GM12878 (cell line): ENCODE measurements at regions of chr11 and their contacts with region 1.

Region 1: GRCh38 chr11:95699631-95700470 is 89.7 kb downstream of the FAM76B start:
- DNase-seq: no peak
- ATAC-seq: peak; percentile 73
- H3K4me3 ChIP-seq: peak overlapping the region; percentile 30; the same call in 1 of the 2 replicates
- H3K27ac ChIP-seq: peak overlapping the region; percentile 15; the same call in 1 of the 2 replicates
- H3K4me1 ChIP-seq: peaks cover 18% of the 10 kb centered on the region
- H3K27me3 ChIP-seq: no peaks in the 10 kb centered on the region
- CTCF ChIP-seq: no peak
- EP300 ChIP-seq: 0 out of 4 replicates have a peak, but pooled peaks of 1 of the 2 experiments have one; percentile 13
- POLR2A ChIP-seq: no peak
- RAD21 ChIP-seq: no peak

Region 2: DNA sequence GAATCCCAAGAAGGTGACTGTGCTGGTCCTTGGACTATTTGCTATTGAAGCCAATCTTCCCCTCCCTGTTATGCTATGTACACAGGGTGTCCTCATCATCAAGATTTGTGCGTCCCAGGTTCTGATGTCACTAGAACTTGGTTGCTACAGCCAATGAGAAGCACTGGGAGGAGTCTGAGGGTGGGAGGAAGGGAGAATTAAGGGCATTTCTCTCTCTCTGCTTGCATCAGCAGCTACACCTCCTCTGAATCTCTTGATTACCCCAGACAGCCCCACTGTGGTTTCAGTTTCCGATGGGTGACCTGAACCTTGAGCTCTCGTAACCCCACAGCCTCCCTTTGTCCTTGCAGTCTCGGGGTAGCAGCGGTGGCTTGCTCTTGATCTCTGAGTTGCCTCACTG is 256.5 kb before region 1 on chr11:
- CTCF ChIA-PET with region 1: interaction called, 15 read pairs
- POLR2A ChIA-PET with region 1: no interaction called
- RAD21 ChIA-PET with region 1: interaction called, 9 read pairs
- SMC1A ChIA-PET with region 1: interaction called, 5 read pairs
- in situ Hi-C with region 1: no loop called
- intact Hi-C with region 1: loop called (anchors 5 kb)
- DNase-seq: peak; percentile 48
- ATAC-seq: peak; percentile 100
- H3K4me3 ChIP-seq: no peak overlapping the region
- H3K27ac ChIP-seq: no peak overlapping the region
- H3K4me1 ChIP-seq: no peaks in the 10 kb centered on the region; the same call in 1 of the 2 replicates
- H3K27me3 ChIP-seq: peaks cover 0 to 2% of the 10 kb centered on the region in 2 experiments; a peak in 1 of 4 replicates
- CTCF ChIP-seq: no peak
- EP300 ChIP-seq: peak in 1 of 2 experiments; percentile 21; a peak in 1 of 4 replicates
- POLR2A ChIP-seq: no peak
- RAD21 ChIP-seq: no peak

Region 3: GRCh38 chr11:95545116-95545875 is 154.6 kb before region 1 on chr11:
- CTCF ChIA-PET with region 1: interaction called, 36 read pairs
- POLR2A ChIA-PET with region 1: no interaction called
- RAD21 ChIA-PET with region 1: interaction called, 22 read pairs
- SMC1A ChIA-PET with region 1: interaction called, 23 read pairs
- in situ Hi-C with region 1: no loop called
- intact Hi-C with region 1: no loop called
- DNase-seq: no peak
- ATAC-seq: peak; percentile 62
- H3K4me3 ChIP-seq: no peak overlapping the region
- H3K27ac ChIP-seq: no peak overlapping the region
- H3K4me1 ChIP-seq: no peaks in the 10 kb centered on the region
- H3K27me3 ChIP-seq: no peaks in the 10 kb centered on the region; a peak in 1 of 4 replicates
- CTCF ChIP-seq: peak in 2 of 3 experiments; percentile 19 to 27; a peak in 2 of 6 replicates
- EP300 ChIP-seq: no peak
- POLR2A ChIP-seq: no peak
- RAD21 ChIP-seq: peak; percentile 30; the same call in 1 of the 2 replicates

Region 4: DNA sequence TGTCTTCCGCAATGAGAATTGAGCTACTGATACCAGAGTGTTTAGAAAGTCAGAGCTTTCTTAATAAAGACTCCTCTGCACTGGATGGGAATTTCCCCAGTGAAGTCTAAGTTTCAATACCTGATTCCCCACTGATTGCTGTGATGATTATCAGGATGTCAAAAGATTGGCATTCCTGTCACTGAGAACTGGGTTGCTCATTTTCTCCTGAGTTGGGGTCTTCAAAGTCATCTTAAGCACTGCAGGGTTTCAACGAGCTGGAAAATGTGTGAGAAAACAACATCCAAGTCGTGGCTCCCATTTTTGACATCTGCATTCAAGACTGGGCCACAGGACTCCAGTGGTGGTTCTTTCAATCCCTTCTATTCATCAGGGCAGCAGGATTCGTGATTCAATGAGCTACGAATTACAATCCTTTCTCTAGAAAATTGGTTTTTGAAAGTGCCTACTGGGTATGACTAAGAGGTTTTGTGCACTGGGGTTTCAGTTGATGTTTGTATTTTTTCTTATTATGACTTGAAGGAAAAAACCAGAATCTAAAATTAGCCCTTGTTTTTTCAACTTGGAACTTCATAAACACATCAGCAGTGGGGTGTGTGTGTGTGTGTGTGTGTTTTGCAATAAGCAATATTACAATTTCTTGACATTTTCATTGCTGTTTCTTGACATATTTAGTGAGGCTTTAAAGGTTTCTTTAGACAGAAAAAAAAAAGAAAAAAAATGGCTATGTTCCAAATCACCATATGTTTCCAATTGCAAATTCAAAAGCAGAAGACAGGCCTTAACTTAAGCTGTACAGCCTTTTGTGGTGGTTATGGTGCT is 143.3 kb before region 1 on chr11:
- CTCF ChIA-PET with region 1: interaction called, 15 read pairs
- POLR2A ChIA-PET with region 1: interaction called, 10 read pairs
- RAD21 ChIA-PET with region 1: interaction called, 28 read pairs
- SMC1A ChIA-PET with region 1: interaction called, 57 read pairs
- in situ Hi-C with region 1: no loop called
- intact Hi-C with region 1: loop called (anchors 1 kb)
- DNase-seq: peak; percentile 75
- ATAC-seq: peak; percentile 91
- H3K4me3 ChIP-seq: peak overlapping the region; percentile 22; the same call in 1 of the 2 replicates
- H3K27ac ChIP-seq: peak overlapping the region; percentile 86
- H3K4me1 ChIP-seq: peaks cover 21% of the 10 kb centered on the region
- H3K27me3 ChIP-seq: no peaks in the 10 kb centered on the region
- CTCF ChIP-seq: no peak
- EP300 ChIP-seq: peak; percentile 88 to 89
- POLR2A ChIP-seq: no peak
- RAD21 ChIP-seq: no peak

Region 5: DNA sequence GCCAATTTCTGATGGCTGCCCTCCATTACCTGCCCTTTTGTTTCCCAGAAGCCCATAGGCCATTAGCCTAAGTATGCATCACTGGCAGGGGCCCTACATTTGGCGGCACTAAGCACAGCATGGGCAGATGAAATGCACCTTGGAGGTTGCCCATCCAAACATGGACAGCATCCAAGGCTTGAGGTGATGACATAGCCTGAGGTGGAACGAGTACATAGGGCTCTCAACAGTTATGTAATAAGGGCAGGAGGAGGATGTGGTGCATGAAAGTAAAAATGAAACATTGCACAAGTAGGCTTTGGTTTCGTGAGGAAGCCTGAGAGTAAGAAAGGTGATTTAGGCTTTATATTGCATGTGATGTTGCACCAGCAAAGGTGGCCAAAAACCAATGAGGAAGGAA is 58.4 kb before region 1 on chr11:
- CTCF ChIA-PET with region 1: interaction called, 5 read pairs
- POLR2A ChIA-PET with region 1: no interaction called
- RAD21 ChIA-PET with region 1: interaction called, 6 read pairs
- SMC1A ChIA-PET with region 1: interaction called, 11 read pairs
- in situ Hi-C with region 1: no loop called
- intact Hi-C with region 1: no loop called
- DNase-seq: peak; percentile 60
- ATAC-seq: peak; percentile 100
- H3K4me3 ChIP-seq: no peak overlapping the region
- H3K27ac ChIP-seq: no peak overlapping the region
- H3K4me1 ChIP-seq: peaks cover 9% of the 10 kb centered on the region
- H3K27me3 ChIP-seq: no peaks in the 10 kb centered on the region
- CTCF ChIP-seq: no peak
- EP300 ChIP-seq: peak in 1 of 2 experiments; percentile 41; a peak in 1 of 4 replicates
- POLR2A ChIP-seq: no peak
- RAD21 ChIP-seq: no peak

Region 6: DNA sequence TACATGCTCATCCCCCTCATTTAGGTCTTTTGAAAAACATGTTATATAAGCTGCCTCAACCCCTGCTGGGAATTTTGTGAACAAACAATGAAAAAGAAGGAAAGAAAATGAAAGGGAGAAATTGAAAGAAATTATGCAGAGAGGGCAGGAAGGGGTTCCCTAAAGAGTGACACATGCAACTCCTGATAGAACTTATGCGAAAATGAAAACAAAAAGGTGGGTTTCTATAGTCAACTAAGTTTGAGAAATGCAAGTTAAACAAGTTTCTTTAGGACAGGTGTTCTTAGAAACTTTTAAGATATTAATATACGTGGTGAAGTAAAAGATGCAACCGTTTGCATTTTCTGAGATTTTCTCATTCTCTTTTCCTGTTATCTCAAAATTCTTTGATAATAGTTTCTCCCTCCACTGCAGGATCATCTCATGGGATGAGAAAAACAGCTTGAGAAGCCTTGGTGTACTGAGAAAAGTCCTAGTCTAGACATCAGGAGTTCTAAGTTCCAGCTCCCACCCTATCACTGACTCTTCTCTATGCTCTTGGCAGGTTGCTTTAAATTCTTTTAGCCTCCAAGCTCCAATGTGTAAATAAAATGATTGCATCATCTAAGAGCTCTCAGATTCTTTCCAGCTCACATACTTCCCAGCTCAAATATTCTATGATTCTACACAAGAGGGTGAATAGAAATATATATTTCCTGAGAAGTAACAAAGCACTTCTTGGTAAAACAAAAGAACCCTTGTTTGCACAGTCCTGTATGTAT is 19.5 kb before region 1 on chr11:
- CTCF ChIA-PET with region 1: interaction called, 19 read pairs
- POLR2A ChIA-PET with region 1: interaction called, 7 read pairs
- RAD21 ChIA-PET with region 1: interaction called, 10 read pairs
- SMC1A ChIA-PET with region 1: interaction called, 71 read pairs
- in situ Hi-C with region 1: no loop called
- intact Hi-C with region 1: no loop called
- DNase-seq: no peak
- ATAC-seq: peak; percentile 79
- H3K4me3 ChIP-seq: no peak overlapping the region
- H3K27ac ChIP-seq: no peak overlapping the region; the same call in 1 of the 2 replicates
- H3K4me1 ChIP-seq: peaks cover 7% of the 10 kb centered on the region
- H3K27me3 ChIP-seq: no peaks in the 10 kb centered on the region
- CTCF ChIP-seq: no peak
- EP300 ChIP-seq: no peak
- POLR2A ChIP-seq: no peak
- RAD21 ChIP-seq: no peak

Region 7: DNA sequence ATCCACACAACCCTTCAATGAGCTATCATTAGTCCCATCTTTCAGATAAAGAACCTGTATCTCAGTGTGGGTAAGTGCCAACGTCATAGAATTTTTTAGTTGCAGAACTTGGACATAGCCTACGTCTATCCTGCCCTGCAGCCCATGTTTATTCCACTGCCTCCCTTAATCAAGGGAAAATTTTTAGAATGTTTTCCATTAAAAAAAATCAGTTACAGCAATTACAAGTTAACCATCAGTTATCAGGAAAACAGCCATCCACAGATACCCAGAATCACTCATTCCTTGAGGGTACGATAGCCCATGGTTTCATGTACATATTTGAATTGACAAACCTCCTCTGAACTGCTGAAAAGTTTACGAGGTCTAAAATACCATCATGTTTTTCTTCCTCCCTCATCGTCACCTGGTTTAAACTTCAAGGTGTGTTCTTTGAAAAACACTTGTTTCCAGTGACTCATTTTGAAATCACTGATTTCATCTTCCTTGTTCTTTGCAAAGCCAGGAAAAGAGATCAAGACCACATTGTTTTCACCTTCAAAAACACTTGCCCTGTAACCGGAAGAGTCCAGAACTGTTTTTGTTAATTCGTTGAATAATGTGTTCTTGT is 11.2 kb before region 1 on chr11:
- CTCF ChIA-PET with region 1: interaction called, 14 read pairs
- POLR2A ChIA-PET with region 1: interaction called, 4 read pairs
- RAD21 ChIA-PET with region 1: interaction called, 20 read pairs
- SMC1A ChIA-PET with region 1: interaction called, 110 read pairs
- in situ Hi-C with region 1: no loop called
- intact Hi-C with region 1: no loop called
- DNase-seq: no peak
- ATAC-seq: peak; percentile 57
- H3K4me3 ChIP-seq: no peak overlapping the region
- H3K27ac ChIP-seq: no peak overlapping the region
- H3K4me1 ChIP-seq: no peaks in the 10 kb centered on the region
- H3K27me3 ChIP-seq: no peaks in the 10 kb centered on the region; a peak in 1 of 4 replicates
- CTCF ChIP-seq: no peak
- EP300 ChIP-seq: no peak
- POLR2A ChIP-seq: no peak
- RAD21 ChIP-seq: no peak